ENCODE measurements at regions of chr16 and their contacts with region 1.

Region 1: DNA sequence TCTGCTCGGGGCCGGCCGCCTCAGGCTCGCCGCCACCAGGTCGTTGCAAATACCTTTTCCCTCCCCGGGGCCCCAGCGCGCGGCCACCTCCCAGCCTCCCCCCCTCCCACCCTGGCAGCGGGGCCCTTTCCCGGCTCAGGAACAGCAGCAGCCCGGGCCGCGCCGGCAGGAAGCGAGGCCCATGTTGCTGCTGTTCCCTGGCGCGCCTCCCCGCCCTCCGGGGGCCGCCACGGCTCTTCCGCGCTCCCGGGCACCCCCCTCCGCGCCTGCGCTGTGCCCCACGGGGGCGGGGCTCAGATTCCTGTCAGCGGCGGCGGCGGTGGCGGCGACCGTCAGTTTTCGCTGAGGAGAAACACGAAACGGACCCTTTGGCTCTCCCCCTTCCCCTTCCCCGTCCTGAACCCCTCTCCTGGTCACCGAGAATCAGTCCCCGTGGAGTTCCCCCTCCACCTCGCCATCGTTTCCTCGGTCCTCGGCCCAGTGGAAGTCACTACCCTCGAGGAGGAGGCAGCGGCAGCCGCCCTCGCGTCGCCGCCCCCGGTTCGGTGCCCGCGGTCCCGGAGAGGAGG is at the start of gene NFAT5:
- DNase-seq: peak; percentile 96
- ATAC-seq: peak; percentile 75
- H3K4me3 ChIP-seq: peak within 1 kb of the TSS; percentile 63 to 88 (median 73)
- H3K4me3 Mint-ChIP-seq: peak within 1 kb of the TSS; percentile 97
- H3K27ac ChIP-seq: peak within 1 kb of the TSS; percentile 88 to 95
- H3K27ac Mint-ChIP-seq: peak within 1 kb of the TSS; percentile 94
- H3K4me1 ChIP-seq: peaks cover 33 to 39% of the 10 kb centered on the region in 2 donors
- H3K4me1 Mint-ChIP-seq: peaks cover 48% of the 10 kb centered on the region
- H3K27me3 ChIP-seq: no peaks in the 10 kb centered on the region
- H3K27me3 Mint-ChIP-seq: no peaks in the 10 kb centered on the region
- CTCF ChIP-seq: no peak
- total RNA-seq, gene NFAT5: 50.0 and 52.1 TPM in 2 replicates

Region 2: DNA sequence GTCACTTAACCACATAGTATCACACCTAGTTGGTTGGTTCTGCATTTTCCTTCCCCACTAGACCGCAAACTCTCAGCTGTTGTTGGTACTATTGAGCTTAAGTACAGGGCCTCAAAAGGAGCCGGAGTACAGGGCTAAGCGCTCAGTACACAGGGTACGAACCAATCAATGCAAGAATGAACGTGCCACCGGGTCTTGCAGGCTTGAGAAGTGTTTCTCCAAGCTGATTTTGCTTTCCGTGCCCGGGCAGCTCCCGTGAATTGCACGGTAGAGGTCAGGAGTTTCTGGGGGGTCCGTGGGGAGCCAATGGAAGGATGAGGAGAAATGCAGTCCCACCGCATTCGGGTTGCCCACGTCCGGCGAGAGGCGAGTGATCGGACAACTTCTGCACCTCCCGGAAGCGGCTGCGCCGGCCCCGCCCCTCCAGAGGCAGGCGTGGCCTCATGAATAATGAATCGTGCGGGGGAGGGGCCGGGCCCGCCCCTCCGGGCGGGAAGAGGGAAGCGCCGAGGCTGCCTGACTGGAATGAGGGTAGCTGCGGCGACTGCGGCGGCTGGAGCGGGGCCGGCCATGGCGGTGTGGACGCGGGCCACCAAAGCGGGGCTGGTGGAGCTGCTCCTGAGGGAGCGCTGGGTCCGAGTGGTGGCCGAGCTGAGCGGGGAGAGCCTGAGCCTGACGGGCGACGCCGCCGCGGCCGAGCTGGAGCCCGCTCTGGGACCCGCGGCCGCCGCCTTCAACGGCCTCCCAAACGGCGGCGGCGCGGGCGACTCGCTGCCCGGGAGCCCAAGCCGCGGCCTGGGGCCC is 378.9 kb before region 1 on chr16 and contains the start of gene SNTB2:
- CTCF ChIA-PET with region 1: no interaction called
- POLR2A ChIA-PET with region 1: no interaction called
- intact Hi-C with region 1: loop called (anchors 10 kb)
- DNase-seq: peak; percentile 90
- ATAC-seq: peak; percentile 80
- H3K4me3 ChIP-seq: peak within 1 kb of the TSS; percentile 75 to 81 (median 76)
- H3K4me3 Mint-ChIP-seq: peak within 1 kb of the TSS; percentile 99
- H3K27ac ChIP-seq: peak within 1 kb of the TSS; percentile 72 to 77
- H3K27ac Mint-ChIP-seq: peak within 1 kb of the TSS; percentile 100
- H3K4me1 ChIP-seq: peaks cover 17 to 29% of the 10 kb centered on the region in 2 donors
- H3K4me1 Mint-ChIP-seq: peaks cover 32% of the 10 kb centered on the region
- H3K27me3 ChIP-seq: no peaks in the 10 kb centered on the region
- H3K27me3 Mint-ChIP-seq: no peaks in the 10 kb centered on the region
- CTCF ChIP-seq: no peak
- total RNA-seq, gene SNTB2: 16.2 and 19.3 TPM in 2 replicates

Region 3: DNA sequence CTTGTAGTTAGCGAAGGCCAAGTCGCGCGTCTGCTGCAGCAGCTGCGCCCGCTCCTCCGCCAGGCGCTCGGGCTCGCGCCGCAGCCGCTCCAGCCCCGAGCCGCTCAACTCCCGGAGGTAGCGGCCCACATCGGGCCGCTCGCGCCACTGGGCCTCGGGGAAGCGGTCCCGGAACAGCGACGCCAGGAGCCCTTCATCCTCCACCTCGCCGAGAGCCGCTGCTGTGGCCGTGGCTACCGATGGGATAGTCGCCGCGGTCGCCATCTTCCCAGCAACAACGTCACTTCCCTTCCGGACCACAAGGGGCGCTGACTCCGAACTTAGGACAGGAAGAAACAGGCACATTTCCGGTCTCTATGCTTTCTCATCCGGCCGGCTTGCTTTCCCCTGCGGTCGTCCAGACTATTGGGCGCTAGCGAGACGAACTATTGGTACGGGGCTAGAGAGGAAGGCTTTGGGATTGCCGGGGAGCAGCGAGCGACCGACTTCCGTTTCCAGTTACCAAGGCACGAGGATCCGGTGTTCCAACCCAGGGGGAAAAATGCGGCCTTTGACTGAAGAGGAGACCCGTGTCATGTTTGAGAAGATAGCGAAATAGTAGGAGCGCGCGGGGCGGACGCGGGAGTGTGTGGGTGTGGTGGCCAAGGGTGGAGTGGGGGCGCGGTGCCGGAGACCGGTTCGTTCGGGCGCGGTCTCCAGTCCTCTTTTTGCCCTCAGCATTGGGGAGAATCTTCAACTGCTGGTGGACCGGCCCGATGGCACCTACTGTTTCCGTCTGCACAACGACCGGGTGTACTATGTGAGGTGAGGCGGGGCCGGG is 226.3 kb before region 1 on chr16 and contains the starts of genes COG8 and NIP7:
- CTCF ChIA-PET with region 1: no interaction called
- POLR2A ChIA-PET with region 1: no interaction called
- intact Hi-C with region 1: loop called (anchors 2 kb)
- DNase-seq: peak; percentile 96
- ATAC-seq: peak; percentile 94
- H3K4me3 ChIP-seq: peak within 1 kb of the TSS; percentile 26 to 99 (median 68)
- H3K4me3 Mint-ChIP-seq: peak within 1 kb of the TSS; percentile 98
- H3K27ac ChIP-seq: peak within 1 kb of the TSS; percentile 65 to 87
- H3K27ac Mint-ChIP-seq: peak within 1 kb of the TSS; percentile 98
- H3K4me1 ChIP-seq: peaks cover 17 to 27% of the 10 kb centered on the region in 2 donors
- H3K4me1 Mint-ChIP-seq: peaks cover 45% of the 10 kb centered on the region
- H3K27me3 ChIP-seq: no peaks in the 10 kb centered on the region
- H3K27me3 Mint-ChIP-seq: no peaks in the 10 kb centered on the region
- CTCF ChIP-seq: peak; percentile 84
- total RNA-seq, gene COG8: 61.6 and 62.0 TPM in 2 replicates
- total RNA-seq, gene NIP7: 20.2 and 29.3 TPM in 2 replicates

Region 4: DNA sequence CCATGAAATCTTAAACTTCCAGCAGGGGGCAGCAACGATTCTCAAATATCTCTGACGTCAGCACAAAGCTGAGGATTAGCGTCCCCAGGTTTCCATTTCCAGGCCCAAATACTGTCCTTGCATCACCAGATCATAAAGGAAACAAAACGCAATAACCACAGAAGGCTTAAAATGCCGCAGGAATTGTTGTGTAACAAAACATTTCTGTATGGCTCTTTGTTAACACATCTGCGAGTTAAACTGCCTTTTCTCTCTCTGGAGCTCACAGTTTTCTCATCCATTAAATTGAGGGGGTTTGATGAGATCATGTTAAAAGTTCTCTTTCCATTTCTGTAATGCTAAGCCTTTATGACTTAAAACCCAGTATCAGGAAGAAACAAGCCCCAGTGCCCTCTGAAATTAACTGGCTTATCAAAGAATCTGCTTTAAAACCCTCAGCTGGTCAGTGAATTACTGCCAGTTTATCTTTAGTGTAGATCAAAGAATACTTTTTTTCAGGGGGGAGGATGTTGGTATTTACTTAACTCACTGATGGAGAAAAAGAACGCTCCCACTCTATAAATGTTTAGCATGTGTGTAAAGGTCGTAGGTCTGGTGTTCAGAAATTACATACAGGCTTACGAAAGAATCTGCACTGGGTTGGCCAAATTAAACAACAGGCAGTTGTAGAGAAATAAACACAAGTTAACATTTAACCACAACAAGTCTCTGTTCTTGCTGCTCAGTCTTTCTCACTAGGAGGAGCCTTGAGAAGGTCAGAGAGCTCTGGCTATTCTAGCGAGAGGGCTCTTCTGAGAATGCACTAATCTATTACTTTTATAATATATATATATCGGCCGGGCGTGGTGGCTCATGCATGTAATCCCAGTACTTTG is 169.3 kb before region 1 on chr16:
- CTCF ChIA-PET with region 1: interaction called, 26 read pairs
- POLR2A ChIA-PET with region 1: no interaction called
- intact Hi-C with region 1: loop called (anchors 1 kb)
- DNase-seq: peak; percentile 83
- ATAC-seq: peak; percentile 73
- H3K4me3 ChIP-seq: no peak overlapping the region
- H3K4me3 Mint-ChIP-seq: no peak overlapping the region
- H3K27ac ChIP-seq: peak overlapping the region in 1 of 2 donors; percentile 4
- H3K27ac Mint-ChIP-seq: no peak overlapping the region
- H3K4me1 ChIP-seq: no peaks in the 10 kb centered on the region
- H3K4me1 Mint-ChIP-seq: peaks cover 3% of the 10 kb centered on the region
- H3K27me3 ChIP-seq: no peaks in the 10 kb centered on the region
- H3K27me3 Mint-ChIP-seq: no peaks in the 10 kb centered on the region
- CTCF ChIP-seq: peak; percentile 82

Region 5: GRCh38 chr16:69754469-69755310 is 188.9 kb after region 1 on chr16 and contains the start of gene NOB1:
- CTCF ChIA-PET with region 1: interaction called, 3 read pairs
- POLR2A ChIA-PET with region 1: no interaction called
- intact Hi-C with region 1: loop called (anchors 2 kb)
- DNase-seq: peak; percentile 99
- ATAC-seq: peak; percentile 96
- H3K4me3 ChIP-seq: peak within 1 kb of the TSS; percentile 73 to 100 (median 91)
- H3K4me3 Mint-ChIP-seq: peak within 1 kb of the TSS; percentile 99
- H3K27ac ChIP-seq: peak within 1 kb of the TSS; percentile 61 to 76
- H3K27ac Mint-ChIP-seq: peak within 1 kb of the TSS; percentile 94
- H3K4me1 ChIP-seq: peaks cover 8 to 20% of the 10 kb centered on the region in 2 donors
- H3K4me1 Mint-ChIP-seq: peaks cover 21% of the 10 kb centered on the region
- H3K27me3 ChIP-seq: no peaks in the 10 kb centered on the region
- H3K27me3 Mint-ChIP-seq: no peaks in the 10 kb centered on the region
- CTCF ChIP-seq: peak; percentile 92
- total RNA-seq, gene NOB1: 44.9 and 49.6 TPM in 2 replicates